HepG2 (cell line): ENCODE measurements at regions of chr14 and their contacts with region 1.

Region 1: GRCh38 chr14:100375963-100376735 is 53.0 kb downstream of the SLC25A47 start:
- DNase-seq: peak; percentile 88
- ATAC-seq: peak; percentile 97
- H3K4me3 ChIP-seq: peak within 1 kb of the TSS; percentile 79 to 87 (median 81)
- H3K27ac ChIP-seq: peak within 1 kb of the TSS; percentile 69
- H3K4me1 ChIP-seq: peaks cover 33% of the 10 kb centered on the region
- H3K27me3 ChIP-seq: no peaks in the 10 kb centered on the region
- CTCF ChIP-seq: peak; percentile 37
- EP300 ChIP-seq: no peak
- POLR2A ChIP-seq: peak; percentile 57 to 88; a peak in 3 of 4 replicates
- RAD21 ChIP-seq: peak; percentile 48

Region 2: DNA sequence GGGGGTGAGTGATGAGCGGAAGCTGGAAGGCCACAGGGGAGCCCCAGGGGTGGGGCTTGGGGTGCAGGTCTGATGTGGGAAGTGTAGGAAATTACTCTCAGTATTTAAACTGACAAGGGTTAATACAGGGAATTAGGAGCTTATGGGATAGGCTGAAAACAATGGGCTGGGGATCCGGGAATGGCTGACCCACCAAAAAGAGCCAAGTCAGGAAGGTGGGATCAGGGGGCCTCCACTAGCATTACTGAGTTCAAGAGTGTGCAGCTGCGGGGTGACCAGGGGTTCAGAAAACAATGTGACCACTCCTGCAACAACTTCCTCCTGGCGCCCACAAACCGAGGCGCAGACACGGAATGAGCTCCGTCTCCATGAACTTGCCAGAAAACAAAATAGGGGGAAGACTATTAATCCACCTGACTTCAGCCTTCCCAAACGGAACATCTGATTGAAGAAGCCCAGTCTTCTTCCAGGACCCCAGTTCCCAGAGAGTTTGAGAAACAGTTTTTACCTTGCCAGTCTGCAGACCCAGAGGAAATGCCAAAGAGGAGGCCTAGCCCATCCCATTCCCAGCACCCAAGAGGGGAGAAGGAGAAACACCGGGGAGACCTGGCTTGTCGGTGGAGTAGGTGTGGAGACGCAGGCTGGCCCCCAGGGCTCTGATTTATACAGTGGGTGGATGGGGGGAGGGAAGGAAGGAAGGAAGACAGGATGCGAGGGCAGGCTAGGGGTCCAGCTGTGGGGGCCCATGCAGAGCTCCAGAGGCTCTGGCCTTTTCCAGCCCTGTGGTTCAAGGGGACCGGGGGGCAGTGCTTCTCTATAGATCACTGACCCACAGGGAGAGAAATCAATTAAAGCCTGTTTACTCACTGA is 153.7 kb before region 1 on chr14:
- CTCF ChIA-PET with region 1: no interaction called
- POLR2A ChIA-PET with region 1: no interaction called
- in situ Hi-C with region 1: no loop called
- intact Hi-C with region 1: no loop called
- DNase-seq: no peak
- ATAC-seq: peak; percentile 39
- H3K4me3 ChIP-seq: peak overlapping the region; percentile 77 to 81 (median 77)
- H3K27ac ChIP-seq: peak overlapping the region; percentile 68
- H3K4me1 ChIP-seq: peaks cover 36% of the 10 kb centered on the region
- H3K27me3 ChIP-seq: no peaks in the 10 kb centered on the region; a peak in 1 of 5 replicates
- CTCF ChIP-seq: no peak
- EP300 ChIP-seq: no peak
- POLR2A ChIP-seq: no peak
- RAD21 ChIP-seq: no peak

Region 3: GRCh38 chr14:100271247-100271939 is 104.8 kb before region 1 on chr14:
- CTCF ChIA-PET with region 1: interaction called, 5 read pairs
- POLR2A ChIA-PET with region 1: no interaction called
- in situ Hi-C with region 1: no loop called
- intact Hi-C with region 1: loop called (anchors 1 kb)
- DNase-seq: peak; percentile 66
- ATAC-seq: peak; percentile 46; the same call in 1 of the 3 replicates
- H3K4me3 ChIP-seq: no peak overlapping the region
- H3K27ac ChIP-seq: peak overlapping the region; percentile 32
- H3K4me1 ChIP-seq: peaks cover 52% of the 10 kb centered on the region
- H3K27me3 ChIP-seq: no peaks in the 10 kb centered on the region
- CTCF ChIP-seq: peak; percentile 63
- EP300 ChIP-seq: no peak
- POLR2A ChIP-seq: no peak
- RAD21 ChIP-seq: peak; percentile 48; the same call in 1 of the 2 replicates

Region 4: DNA sequence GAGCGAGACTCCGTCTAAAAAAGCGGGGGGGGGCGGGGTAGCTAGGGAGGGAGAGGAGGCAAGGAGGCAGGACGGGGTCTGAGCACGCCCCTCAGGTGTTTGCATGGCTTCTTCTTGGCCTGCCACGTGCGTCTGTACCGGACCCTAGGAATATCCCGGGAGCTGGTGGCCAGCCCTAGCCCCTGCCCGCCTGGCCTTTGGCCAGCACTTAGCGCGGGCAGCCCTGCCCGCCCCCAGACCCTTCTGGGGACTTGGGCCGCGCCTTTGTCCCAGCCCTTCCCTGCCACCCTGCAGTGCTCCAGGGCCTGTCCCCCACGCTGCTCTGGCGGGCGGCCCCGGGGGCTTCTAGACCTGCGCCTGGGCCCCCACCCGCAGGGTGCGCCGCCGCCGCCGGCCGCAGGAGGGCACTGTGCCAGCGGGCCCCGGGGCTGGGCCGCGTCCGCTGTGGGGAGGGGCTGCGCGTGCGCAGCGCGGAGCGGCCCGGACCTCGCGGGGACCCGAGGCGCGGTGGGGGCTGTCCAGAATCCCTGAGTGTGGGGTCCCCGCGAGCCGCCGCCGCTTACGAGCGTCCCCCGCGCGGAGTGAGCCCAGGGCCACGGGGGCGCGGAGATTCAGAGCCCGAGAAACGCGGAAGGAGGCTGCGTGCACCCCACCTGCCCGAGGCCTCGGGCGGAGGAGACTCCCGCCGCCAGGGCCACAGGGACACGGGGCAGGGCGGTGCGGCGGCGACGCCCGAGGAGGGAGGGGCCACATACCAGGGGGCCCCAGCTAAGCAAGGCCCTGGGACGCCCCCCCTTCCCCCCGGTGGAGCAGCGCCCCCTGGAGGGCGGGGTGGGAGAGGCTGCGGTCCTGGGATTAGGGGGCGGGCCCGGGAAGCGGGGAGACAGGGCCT is 90.9 kb before region 1 on chr14:
- CTCF ChIA-PET with region 1: interaction called, 14 read pairs
- POLR2A ChIA-PET with region 1: interaction called, 8 read pairs
- in situ Hi-C with region 1: no loop called
- intact Hi-C with region 1: no loop called
- DNase-seq: peak; percentile 40
- ATAC-seq: peak; percentile 74
- H3K4me3 ChIP-seq: peak overlapping the region; percentile 59 to 77 (median 75)
- H3K27ac ChIP-seq: peak overlapping the region; percentile 84
- H3K4me1 ChIP-seq: peaks cover 62% of the 10 kb centered on the region
- H3K27me3 ChIP-seq: no peaks in the 10 kb centered on the region
- CTCF ChIP-seq: peak; percentile 81
- EP300 ChIP-seq: no peak
- POLR2A ChIP-seq: peak; percentile 49 to 62
- RAD21 ChIP-seq: peak; percentile 83

Region 5: DNA sequence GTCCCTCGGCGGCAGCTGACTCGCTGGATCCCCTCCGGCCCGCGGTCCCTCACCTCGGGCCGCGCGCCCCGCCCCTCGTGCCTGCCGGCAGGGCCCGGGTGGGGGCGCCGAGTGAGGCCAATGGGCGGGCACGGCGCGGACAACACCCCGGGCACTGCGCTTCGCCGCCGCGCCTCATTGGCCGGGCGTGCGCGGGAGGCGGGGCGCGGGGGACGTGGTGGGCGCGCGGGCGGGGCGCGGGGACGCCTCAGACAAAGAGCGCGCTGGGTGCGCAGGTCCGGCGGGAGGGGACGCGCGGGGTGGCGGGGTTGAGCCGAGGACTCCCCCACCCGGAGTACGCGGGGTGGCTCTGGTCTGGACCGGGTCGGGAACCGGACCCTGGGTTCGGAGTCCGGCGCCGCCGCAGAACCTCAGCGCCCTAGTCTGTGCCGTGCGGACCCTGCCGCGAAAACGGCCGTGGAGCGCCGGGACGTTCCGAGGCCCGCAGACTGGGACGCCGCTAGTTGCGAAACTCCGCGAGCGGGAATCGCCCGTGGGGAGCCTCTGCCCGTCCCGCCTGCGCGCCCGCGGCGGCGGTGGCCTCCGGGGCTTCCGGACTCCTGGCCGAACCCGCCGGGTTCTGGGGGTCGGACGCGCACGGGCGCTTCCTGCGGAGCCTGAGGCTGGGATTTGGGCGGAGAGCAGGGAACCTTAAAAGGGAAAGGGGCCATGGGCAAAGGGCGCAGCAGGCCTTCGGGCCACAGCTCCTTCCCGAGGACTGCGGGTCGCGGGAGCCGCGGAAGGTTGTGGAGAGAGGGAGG is 69.5 kb before region 1 on chr14 and contains the start of gene SLC25A29:
- CTCF ChIA-PET with region 1: interaction called, 14 read pairs
- POLR2A ChIA-PET with region 1: interaction called, 4 read pairs
- in situ Hi-C with region 1: loop called (anchors 5 kb)
- intact Hi-C with region 1: loop called (anchors 1 kb)
- DNase-seq: peak; percentile 70
- ATAC-seq: peak; percentile 79
- H3K4me3 ChIP-seq: peak within 1 kb of the TSS; percentile 73 to 87 (median 81)
- H3K27ac ChIP-seq: peak within 1 kb of the TSS; percentile 54
- H3K4me1 ChIP-seq: peaks cover 52% of the 10 kb centered on the region
- H3K27me3 ChIP-seq: peaks cover 0 to 9% of the 10 kb centered on the region in 2 experiments; a peak in 4 of 5 replicates
- CTCF ChIP-seq: peak; percentile 9; the same call in 1 of the 2 replicates
- EP300 ChIP-seq: no peak
- POLR2A ChIP-seq: peak; percentile 28 to 82; a peak in 2 of 4 replicates
- RAD21 ChIP-seq: no peak
- total RNA-seq, gene SLC25A29: 9.6 and 17.2 TPM in 2 replicates

Region 6: DNA sequence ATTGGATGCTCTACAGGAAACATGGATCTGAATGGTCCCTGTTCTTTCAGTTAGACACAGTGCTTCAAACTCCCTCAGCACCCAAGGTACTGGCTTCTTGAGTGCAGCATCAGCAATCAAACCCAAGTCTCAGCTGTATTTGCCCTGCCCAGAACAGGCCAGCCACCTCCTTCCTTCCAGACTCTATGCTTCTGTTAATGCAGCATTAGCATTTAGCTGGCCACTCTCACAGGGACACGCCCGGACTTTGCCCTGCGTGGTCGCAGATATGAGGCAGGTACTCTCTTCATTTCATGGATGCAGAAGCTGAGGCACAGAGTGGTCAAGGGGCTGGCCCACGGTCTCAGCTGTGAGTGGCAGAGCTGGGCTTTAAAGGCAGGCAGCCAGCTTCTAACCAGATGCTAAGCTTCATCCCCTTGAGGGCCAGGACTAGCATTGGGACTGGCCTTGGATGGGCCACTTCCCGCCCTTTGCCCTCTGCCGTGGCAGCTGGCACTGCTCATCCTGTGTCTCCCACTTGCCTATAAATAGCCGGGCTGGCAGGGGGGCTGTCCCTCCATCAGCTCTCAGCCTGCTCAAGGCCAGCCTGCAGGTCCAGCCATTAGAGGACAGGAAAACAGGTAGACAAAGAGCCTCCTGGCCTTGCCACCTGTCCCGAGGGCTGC is 54.5 kb before region 1 on chr14:
- CTCF ChIA-PET with region 1: no interaction called
- POLR2A ChIA-PET with region 1: no interaction called
- in situ Hi-C with region 1: no loop called
- intact Hi-C with region 1: loop called (anchors 5 kb)
- DNase-seq: no peak
- ATAC-seq: no peak
- H3K4me3 ChIP-seq: peak overlapping the region in 1 of 3 experiments; percentile 52; a peak in 1 of 6 replicates
- H3K27ac ChIP-seq: no peak overlapping the region
- H3K4me1 ChIP-seq: peaks cover 83% of the 10 kb centered on the region
- H3K27me3 ChIP-seq: peaks cover 0 to 2% of the 10 kb centered on the region in 2 experiments; a peak in 1 of 5 replicates
- CTCF ChIP-seq: no peak
- EP300 ChIP-seq: no peak
- POLR2A ChIP-seq: no peak
- RAD21 ChIP-seq: no peak

Region 7: GRCh38 chr14:100567009-100567876 is 191.1 kb after region 1 on chr14:
- CTCF ChIA-PET with region 1: no interaction called
- POLR2A ChIA-PET with region 1: no interaction called
- in situ Hi-C with region 1: no loop called
- intact Hi-C with region 1: no loop called
- DNase-seq: no peak
- ATAC-seq: no peak
- H3K4me3 ChIP-seq: no peak overlapping the region
- H3K27ac ChIP-seq: no peak overlapping the region
- H3K4me1 ChIP-seq: no peaks in the 10 kb centered on the region
- H3K27me3 ChIP-seq: peaks cover 22 to 87% of the 10 kb centered on the region in 2 experiments
- CTCF ChIP-seq: no peak
- EP300 ChIP-seq: no peak
- POLR2A ChIP-seq: no peak
- RAD21 ChIP-seq: no peak

Region 8: DNA sequence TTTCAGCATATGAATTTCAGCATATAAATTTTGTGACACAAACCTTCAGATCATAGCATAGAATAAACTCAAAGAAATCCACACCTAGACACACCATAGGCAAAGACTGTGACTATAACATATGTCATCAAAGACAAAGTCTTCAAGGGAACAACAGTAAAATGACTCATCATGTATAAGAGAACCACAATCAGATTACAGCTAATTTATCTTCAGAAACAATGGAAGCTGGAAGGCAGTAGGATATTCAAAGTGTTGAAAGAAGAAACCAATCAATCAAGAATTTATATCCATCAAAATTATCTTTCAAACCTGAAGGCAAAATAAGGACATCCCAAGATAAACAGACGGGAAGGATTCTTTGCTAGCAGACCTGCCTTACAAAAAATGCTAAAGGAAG is 379.5 kb after region 1 on chr14:
- CTCF ChIA-PET with region 1: no interaction called
- POLR2A ChIA-PET with region 1: no interaction called
- in situ Hi-C with region 1: no loop called
- intact Hi-C with region 1: no loop called
- DNase-seq: no peak
- ATAC-seq: no peak
- H3K4me3 ChIP-seq: no peak overlapping the region
- H3K27ac ChIP-seq: no peak overlapping the region
- H3K4me1 ChIP-seq: peaks cover 59% of the 10 kb centered on the region
- H3K27me3 ChIP-seq: no peaks in the 10 kb centered on the region
- CTCF ChIP-seq: no peak
- EP300 ChIP-seq: no peak
- POLR2A ChIP-seq: no peak
- RAD21 ChIP-seq: no peak